ENCODE measurements at regions of chr20 and their contacts with region 1.

Region 1: GRCh38 chr20:45971675-45972499 is at the start of gene ZNF335:
- DNase-seq: peak; percentile 89 to 93
- ATAC-seq: peak; percentile 72 to 87
- H3K4me3 ChIP-seq: peak within 1 kb of the TSS; percentile 74 to 97 (median 88)
- H3K27ac ChIP-seq: peak within 1 kb of the TSS; percentile 90 to 99 (median 96)
- H3K4me1 ChIP-seq: peaks cover 32 to 36% of the 10 kb centered on the region in 2 donors
- H3K27me3 ChIP-seq: no peaks in the 10 kb centered on the region
- CTCF ChIP-seq: peak; percentile 39 to 72 (median 70)
- POLR2A ChIP-seq: peak; percentile 73 to 93
- total RNA-seq, gene ZNF335: 8.3 to 19.1 (median 12.7) TPM

Region 2: GRCh38 chr20:45798935-45799642 is 172.8 kb before region 1 on chr20:
- in situ Hi-C with region 1: loop called in 2 of 4 experiments (anchors 10 to 25 kb)
- intact Hi-C with region 1: loop called (anchors 2 kb)
- DNase-seq: peak; percentile 51 to 67
- ATAC-seq: peak; percentile 34 to 56
- H3K4me3 ChIP-seq: no peak overlapping the region
- H3K27ac ChIP-seq: peak overlapping the region; percentile 73 to 80 (median 76)
- H3K4me1 ChIP-seq: peaks cover 28 to 32% of the 10 kb centered on the region in 2 donors
- H3K27me3 ChIP-seq: no peaks in the 10 kb centered on the region
- CTCF ChIP-seq: peak; percentile 53 to 70 (median 64)
- POLR2A ChIP-seq: no peak

Region 3: DNA sequence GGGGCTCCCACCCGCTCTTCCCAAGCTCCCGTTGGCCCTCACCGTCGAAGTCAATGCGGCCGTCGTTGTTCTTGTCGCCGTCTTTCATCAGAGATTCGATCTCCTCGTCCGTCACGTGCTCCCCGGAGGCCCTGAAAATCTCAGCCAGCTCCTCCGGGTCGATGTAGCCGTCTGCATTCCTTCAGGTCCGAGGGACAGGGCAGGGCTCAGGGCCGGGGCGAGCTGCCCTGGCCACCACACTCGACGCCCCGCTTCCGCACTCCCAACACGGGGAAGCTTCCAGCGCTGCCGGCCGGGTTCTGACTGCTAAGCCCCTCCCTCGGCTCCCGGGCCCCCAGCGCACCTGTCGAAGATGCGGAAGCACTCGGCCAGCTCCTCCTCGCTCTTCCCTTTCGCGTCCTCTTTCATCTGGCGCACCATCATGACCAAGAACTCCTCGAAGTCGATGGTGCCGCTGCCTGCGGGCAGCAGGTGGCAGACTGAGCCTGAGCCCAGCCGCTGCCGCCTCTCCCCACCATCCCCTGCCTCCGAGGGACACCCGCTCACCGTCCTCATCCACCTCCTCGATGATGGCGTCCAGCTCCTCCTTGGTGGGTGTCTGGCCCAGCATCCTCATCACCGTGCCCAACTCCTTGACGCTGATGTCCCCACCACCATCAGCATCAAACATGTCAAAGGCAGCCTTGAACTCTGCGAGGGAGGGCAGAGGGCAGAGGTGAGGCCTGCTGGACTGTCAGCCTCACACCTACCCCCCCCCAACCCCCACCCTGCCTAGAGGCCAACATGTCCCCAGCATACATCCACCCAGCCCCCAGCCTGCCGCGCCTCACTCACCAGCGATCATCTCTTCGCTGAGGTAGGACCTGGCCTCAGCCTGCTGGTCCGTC is 147.7 kb before region 1 on chr20:
- in situ Hi-C with region 1: loop called in 1 of 4 experiments (anchors 25 kb)
- intact Hi-C with region 1: loop called (anchors 2 kb)
- DNase-seq: peak; percentile 50 to 74
- ATAC-seq: peak in 1 of 2 donors; percentile 9
- H3K4me3 ChIP-seq: peak overlapping the region; percentile 27 to 63 (median 46)
- H3K27ac ChIP-seq: peak overlapping the region; percentile 95 to 97 (median 96)
- H3K4me1 ChIP-seq: peaks cover 55 to 60% of the 10 kb centered on the region in 2 donors
- H3K27me3 ChIP-seq: no peaks in the 10 kb centered on the region
- CTCF ChIP-seq: peak; percentile 23 to 68 (median 59)
- POLR2A ChIP-seq: no peak

Region 4: DNA sequence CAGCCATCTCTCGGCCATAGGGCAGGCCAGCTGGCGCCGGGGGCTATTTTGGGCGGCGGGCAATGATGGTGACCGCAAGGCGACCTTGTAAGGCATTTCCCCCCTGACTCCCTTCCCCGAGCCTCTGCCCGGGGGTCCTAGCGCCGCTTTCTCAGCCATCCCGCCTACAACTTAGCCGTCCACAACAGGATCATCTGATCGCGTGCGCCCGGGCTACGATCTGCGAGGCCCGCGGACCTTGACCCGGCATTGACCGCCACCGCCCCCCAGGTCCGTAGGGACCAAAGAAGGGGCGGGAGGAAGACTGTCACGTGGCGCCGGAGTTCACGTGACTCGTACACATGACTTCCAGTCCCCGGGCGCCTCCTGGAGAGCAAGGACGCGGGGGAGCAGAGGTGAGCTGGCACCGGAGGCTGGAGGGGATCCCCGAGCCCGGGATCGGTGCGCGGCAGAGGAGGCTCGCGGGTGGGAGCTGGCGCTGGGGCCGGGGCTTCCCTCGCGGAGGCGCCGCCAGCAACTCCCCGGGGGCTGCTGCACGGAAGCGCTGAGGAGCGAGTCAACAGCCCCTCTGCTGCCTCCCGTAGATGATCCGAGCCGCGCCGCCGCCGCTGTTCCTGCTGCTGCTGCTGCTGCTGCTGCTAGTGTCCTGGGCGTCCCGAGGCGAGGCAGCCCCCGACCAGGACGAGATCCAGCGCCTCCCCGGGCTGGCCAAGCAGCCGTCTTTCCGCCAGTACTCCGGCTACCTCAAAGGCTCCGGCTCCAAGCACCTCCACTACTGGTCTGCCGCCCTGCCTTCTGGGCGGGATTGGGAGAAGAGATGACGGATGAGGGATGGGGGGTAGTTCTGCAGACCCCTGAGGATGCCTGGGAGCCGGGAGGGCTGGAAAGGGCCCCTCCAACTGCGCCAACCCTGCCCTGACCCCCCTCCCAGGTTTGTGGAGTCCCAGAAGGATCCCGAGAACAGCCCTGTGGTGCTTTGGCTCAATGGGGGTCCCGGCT is 80.6 kb before region 1 on chr20 and contains the starts of genes CTSA and NEURL2:
- in situ Hi-C with region 1: no loop called
- intact Hi-C with region 1: loop called (anchors 2 kb)
- DNase-seq: peak; percentile 90 to 93
- ATAC-seq: peak; percentile 89 to 91
- H3K4me3 ChIP-seq: peak within 1 kb of the TSS; percentile 76 to 96 (median 88)
- H3K27ac ChIP-seq: peak within 1 kb of the TSS; percentile 87 to 98 (median 96)
- H3K4me1 ChIP-seq: peaks cover 22 to 26% of the 10 kb centered on the region in 2 donors
- H3K27me3 ChIP-seq: no peaks in the 10 kb centered on the region
- CTCF ChIP-seq: peak in 3 of 5 experiments; percentile 16 to 27 (median 17)
- POLR2A ChIP-seq: peak; percentile 48 to 59
- total RNA-seq, gene CTSA: 21.9 to 59.2 (median 46.2) TPM
- total RNA-seq, gene NEURL2: 4.9 to 24.1 (median 10.2) TPM

Region 5: DNA sequence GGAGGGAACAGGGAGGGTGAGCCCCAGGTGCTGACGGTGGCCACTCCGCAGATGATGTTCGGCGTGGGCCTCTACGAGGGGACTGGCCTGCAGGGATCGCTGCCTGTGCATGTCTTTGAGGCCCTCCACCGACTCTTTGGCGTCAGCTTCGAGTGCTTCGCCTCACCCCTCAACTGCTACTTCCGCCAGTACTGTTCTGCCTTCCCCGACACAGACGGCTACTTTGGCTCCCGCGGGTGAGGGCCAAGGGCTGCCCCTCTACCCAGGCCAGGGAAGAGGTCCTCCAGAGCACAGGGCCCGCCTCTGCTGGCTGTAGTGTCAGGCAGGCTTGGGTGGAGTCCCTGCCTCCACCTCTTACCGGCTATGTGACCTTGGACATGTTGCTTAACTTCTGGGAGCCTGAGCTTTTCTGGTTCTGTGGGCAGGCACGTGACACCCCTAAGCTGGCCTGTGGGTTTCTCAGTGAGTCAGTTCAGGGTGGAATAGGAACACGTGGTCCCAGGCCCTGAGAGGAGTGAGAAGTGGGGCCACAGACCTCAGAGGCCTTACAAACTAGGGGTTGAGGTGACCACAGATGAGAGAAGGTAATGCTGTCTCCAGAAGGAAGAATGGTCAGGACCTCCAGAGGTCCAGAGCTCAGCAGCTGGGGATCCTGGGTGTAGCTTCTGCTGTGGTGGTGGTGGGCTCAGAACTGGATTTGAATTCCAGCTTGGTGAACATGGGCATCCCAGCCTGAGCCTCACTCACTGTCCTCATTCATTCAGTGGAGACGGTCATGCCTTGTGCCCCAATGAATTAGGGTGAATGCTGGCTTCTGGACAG is 25.5 kb before region 1 on chr20:
- in situ Hi-C with region 1: no loop called
- intact Hi-C with region 1: loop called (anchors 2 kb)
- DNase-seq: peak; percentile 81 to 91
- ATAC-seq: peak; percentile 65 to 89
- H3K4me3 ChIP-seq: no peak overlapping the region
- H3K27ac ChIP-seq: peak overlapping the region; percentile 86 to 96 (median 92)
- H3K4me1 ChIP-seq: peaks cover 15 to 35% of the 10 kb centered on the region in 2 donors
- H3K27me3 ChIP-seq: no peaks in the 10 kb centered on the region
- CTCF ChIP-seq: no peak
- POLR2A ChIP-seq: peak in 1 of 2 donors; percentile 57

Region 6: DNA sequence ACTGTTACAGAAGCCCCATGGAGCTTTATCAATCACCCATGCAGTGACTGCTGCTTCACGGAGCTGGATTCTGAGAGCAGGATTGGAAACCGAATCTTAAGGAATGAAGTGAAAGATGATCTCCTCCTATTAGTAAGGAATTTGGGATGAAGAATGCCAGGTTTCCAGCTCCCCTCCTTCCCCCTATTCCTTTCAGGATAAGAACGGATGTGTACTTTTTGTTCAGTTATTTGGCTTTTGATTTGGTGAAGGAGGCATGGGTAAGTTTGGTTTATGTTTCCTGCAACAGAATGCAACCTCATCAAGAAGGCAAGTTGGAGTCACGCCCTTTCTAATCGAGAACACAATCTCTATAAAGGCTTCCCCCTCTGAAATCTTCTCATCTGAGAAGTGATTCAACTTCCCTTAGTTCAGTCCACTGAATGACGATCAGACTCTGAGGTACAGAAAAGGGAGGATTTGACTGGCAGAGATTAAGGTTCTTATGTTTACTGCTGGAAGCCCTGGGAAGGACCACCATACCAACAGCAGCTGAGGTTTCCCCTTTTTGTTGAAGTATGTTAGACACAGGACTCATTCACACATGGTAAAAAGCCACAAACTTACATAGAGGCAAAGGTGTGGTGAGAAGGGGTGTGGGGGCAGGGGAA is 429.1 kb after region 1 on chr20:
- in situ Hi-C with region 1: no loop called
- intact Hi-C with region 1: loop called (anchors 5 kb)
- DNase-seq: no peak
- ATAC-seq: no peak
- H3K4me3 ChIP-seq: peak overlapping the region; percentile 11 to 21 (median 16)
- H3K27ac ChIP-seq: peak overlapping the region; percentile 80 to 93 (median 85)
- H3K4me1 ChIP-seq: peaks cover 70 to 73% of the 10 kb centered on the region in 2 donors
- H3K27me3 ChIP-seq: no peaks in the 10 kb centered on the region
- CTCF ChIP-seq: no peak
- POLR2A ChIP-seq: no peak